Left colon (tissue), 2 donors: ENCODE measurements at regions of chr7 and their contacts with region 1.

Region 1: DNA sequence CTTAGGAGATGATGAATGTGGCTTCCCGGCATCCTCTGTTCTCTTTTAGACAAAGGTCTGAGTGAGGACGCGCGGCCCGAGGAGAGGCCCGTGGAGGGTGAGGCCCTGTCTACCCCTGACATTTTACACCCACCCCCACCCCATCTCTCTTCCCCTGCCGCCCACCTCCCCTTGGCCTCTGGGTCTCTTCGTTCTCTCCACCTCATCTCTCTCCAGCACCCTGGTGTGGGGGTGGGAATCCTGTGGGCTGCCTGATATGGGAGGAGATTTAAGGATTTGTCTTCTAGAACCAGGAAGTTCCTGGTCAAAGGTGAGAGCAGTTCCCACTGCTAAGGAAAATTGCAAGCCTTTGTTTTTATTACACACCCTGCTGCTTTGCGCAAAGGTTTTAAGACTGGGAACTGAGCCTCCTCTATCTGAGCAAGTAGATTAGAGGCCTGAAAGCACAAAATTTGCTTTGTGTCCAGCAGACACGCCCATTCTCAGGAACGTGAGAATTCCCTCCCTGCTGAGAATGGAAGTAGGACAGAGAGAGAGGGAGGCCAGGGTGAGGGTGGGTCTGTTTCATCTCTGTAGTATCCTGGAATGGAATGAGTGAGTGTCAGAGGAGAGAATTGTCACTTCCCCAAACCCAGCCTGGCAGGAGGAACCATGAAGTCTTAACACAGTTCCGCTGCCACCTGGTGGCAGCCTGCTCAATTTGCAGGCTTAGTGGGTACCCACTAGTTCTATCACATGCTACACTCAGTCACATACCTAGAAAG is 91.2 kb downstream of the GTF2IRD1 start:
- DNase-seq: peak; percentile 55 to 59
- ATAC-seq: peak; percentile 79

Region 2: DNA sequence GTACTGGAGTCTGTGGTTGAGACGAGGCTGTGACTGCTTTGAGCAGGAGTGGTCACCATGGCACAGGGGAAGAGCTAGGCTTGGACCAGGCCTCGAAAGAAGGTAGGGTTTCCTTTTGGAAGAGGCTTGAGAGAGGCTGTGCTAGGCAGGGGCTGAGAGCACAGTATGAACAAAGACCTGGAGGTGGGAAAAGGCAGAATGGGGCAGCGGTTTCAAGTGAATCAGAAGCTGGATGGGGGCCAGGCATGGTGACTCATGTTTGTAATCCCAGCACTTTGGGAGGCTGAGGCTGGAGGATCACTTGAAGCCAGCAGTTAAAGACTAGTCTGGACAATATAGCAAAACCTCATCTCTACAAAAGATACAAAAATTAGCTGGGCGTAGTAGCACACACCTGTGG is 189.8 kb before region 1 on chr7:
- intact Hi-C with region 1: no loop called
- DNase-seq: no peak
- ATAC-seq: no peak

Region 3: GRCh38 chr7:74417419-74417971 is 127.4 kb before region 1 on chr7:
- intact Hi-C with region 1: loop called in 1 of 2 experiments (anchors 5 kb)
- DNase-seq: peak; percentile 36 to 47
- ATAC-seq: peak; percentile 91

Region 4: GRCh38 chr7:74466196-74466813 is 78.6 kb before region 1 on chr7:
- intact Hi-C with region 1: no loop called
- DNase-seq: no peak
- ATAC-seq: peak; percentile 62